A549 (cell line): ENCODE measurements at regions of chr12 and their contacts with region 1.

Region 1: DNA sequence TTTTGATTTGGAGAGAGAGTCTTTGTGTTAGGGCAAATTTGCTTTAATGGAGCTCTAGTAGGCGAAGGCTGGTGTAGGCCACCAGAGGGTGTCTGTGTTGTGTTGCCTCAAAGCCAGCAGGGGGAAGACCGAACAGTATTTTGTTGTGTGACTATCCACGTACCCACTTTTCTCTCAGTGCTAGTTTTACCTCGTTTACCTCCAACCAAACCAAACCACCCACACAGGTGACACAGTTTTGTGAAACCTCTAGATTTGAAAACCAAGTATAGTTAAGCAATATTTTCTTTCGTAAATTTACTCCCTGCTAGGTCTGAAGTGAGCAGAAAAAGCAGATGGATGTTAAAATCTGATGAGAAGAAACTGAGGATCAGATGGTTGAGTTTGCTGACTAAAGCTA is 36.3 kb upstream of the NPFF start:
- DNase-seq: peak; percentile 74 to 81
- ATAC-seq: peak; percentile 97 to 99
- H3K4me3 ChIP-seq: no peak overlapping the region
- H3K27ac ChIP-seq: peak overlapping the region; percentile 45 to 53
- H3K4me1 ChIP-seq: peaks cover 23% of the 10 kb centered on the region
- CTCF ChIP-seq: peak; percentile 93
- EP300 ChIP-seq: no peak
- POLR2A ChIP-seq: no peak
- RAD21 ChIP-seq: peak; percentile 92 to 94

Region 2: DNA sequence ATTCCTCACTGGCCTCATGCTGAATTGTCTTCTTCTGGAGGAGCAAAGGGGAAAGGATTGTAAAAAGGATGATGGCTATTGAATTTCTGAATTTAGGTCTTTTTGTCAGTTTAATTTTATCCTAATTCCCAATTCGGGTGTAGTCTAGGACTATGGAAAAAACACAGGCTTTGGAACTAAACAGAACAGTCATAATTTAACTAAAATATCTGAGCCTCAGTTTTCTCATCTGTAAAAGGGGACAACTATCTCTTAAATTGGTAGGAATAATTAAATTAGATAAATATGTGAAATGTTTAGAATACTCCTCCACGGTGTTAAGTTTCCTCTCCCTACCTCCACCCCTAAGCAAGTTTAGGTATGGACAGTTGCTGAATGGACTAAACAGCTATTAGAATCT is 166.8 kb before region 1 on chr12:
- CTCF ChIA-PET with region 1: no interaction called
- POLR2A ChIA-PET with region 1: no interaction called
- DNase-seq: no peak
- ATAC-seq: no peak
- H3K4me3 ChIP-seq: no peak overlapping the region
- H3K27ac ChIP-seq: peak overlapping the region in 1 of 2 experiments; percentile 38; a peak in 3 of 6 replicates
- H3K4me1 ChIP-seq: peaks cover 32% of the 10 kb centered on the region
- CTCF ChIP-seq: no peak
- EP300 ChIP-seq: no peak
- POLR2A ChIP-seq: no peak
- RAD21 ChIP-seq: no peak

Region 3: GRCh38 chr12:53561590-53561953 is 18.0 kb after region 1 on chr12:
- CTCF ChIA-PET with region 1: interaction called, 35 read pairs
- POLR2A ChIA-PET with region 1: no interaction called
- DNase-seq: peak; percentile 75 to 88
- ATAC-seq: peak; percentile 90 to 95
- H3K4me3 ChIP-seq: 0 out of 3 replicates have a peak overlapping the region, but pooled peaks have one; percentile 7
- H3K27ac ChIP-seq: peak overlapping the region; percentile 71 to 87
- H3K4me1 ChIP-seq: peaks cover 66% of the 10 kb centered on the region
- CTCF ChIP-seq: no peak
- EP300 ChIP-seq: no peak
- POLR2A ChIP-seq: no peak
- RAD21 ChIP-seq: 0 out of 5 replicates have a peak, but pooled peaks of 1 of the 2 experiments have one; percentile 4

Region 4: DNA sequence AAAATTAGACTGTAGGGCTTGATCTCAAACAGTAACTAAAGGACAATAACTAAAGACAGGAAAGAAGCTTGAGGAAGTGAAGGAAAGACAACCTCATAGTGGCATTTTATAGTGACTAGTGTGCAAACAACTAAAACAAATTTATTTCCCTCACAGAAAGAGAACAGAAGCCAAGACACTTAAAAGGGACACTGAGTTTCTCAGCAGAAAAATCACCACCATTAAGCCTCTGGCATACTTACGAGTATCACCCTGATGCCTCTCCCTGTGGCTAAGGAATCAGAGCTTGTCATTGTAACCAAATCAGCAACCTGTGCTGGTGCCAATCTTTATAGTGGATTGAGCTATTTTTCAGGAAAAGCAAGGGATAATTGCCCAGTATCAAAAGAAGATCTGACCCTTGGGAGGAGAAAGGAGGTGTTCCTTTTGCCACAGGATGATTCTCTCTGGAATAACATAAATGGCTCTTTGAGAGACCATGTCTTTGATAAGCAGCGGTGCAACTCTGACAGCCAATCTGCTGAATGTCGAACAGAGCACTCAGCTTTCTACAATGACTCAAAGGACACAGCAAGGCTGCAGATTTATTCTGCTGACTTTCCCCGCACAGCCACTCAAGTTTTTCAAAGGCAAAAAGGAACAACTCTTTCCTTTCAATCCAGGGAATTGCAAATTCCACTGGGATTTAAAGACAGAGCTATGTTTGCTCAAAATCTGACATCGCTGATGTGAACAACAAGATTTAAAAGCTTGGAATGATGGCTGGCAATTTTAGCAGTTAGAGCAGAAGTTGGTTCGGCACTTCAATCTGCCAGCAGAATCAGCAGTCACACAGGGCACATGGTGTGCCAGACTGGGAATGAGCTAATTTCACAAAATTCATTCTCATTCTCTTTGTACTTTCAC is 48.0 kb after region 1 on chr12:
- CTCF ChIA-PET with region 1: interaction called, 11 read pairs
- POLR2A ChIA-PET with region 1: no interaction called
- DNase-seq: no peak
- ATAC-seq: no peak
- H3K4me3 ChIP-seq: no peak overlapping the region
- H3K27ac ChIP-seq: peak overlapping the region in 1 of 2 experiments; percentile 10; a peak in 1 of 6 replicates
- H3K4me1 ChIP-seq: peaks cover 16% of the 10 kb centered on the region; the same call in 2 of the 3 replicates
- CTCF ChIP-seq: no peak
- EP300 ChIP-seq: no peak
- POLR2A ChIP-seq: no peak
- RAD21 ChIP-seq: no peak

Region 5: DNA sequence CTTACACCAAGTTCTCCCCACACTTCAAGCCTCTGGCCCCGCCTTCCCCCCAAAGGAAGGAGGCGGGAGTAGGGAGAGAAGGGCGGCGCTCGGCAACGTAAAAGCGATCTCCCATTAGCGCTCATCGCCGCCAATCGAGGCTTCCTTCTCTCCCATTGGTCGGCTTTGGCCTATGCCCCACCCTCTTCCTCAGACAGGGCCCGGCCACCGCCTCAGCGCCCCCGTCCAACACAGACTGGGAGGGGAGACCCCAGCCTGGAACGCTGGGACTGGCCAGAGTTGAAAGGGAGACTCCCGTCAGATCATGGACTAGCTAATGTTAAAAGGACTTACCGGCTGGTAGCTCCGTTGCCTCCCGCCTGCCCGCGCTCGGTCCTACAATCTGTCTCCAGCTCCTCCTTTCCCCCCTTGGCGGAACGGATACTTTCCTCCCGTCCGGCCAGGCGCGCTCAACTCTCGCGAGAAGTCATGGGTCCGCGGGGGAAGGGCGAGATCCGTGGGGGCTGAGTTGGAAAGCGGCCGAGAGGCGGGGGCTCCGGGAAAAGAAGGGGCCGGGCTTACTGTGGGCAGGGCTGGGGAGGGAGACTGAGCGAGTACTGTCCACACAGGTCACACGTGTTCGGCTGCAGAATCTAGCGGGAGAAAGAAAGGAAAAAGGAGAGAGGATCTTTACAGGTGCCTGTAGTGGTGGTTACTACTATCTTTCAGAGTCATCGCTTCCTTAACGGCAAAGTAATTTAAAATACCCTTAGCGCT is 82.6 kb after region 1 on chr12 and contains the start of gene ATF7:
- CTCF ChIA-PET with region 1: interaction called, 41 read pairs
- POLR2A ChIA-PET with region 1: interaction called, 5 read pairs
- DNase-seq: peak; percentile 97 to 99
- ATAC-seq: peak; percentile 98
- H3K4me3 ChIP-seq: peak within 1 kb of the TSS; percentile 67
- H3K27ac ChIP-seq: peak within 1 kb of the TSS; percentile 93 to 94
- H3K4me1 ChIP-seq: peaks cover 36% of the 10 kb centered on the region
- CTCF ChIP-seq: no peak
- EP300 ChIP-seq: no peak
- POLR2A ChIP-seq: peak; percentile 69
- RAD21 ChIP-seq: no peak; a peak in 2 of 5 replicates
- polyA plus RNA-seq, gene ATF7: 38.7 and 38.9 TPM in 2 replicates

Region 6: GRCh38 chr12:53684654-53685220 is 141.2 kb after region 1 on chr12:
- CTCF ChIA-PET with region 1: interaction called, 148 read pairs
- POLR2A ChIA-PET with region 1: interaction called, 5 read pairs
- DNase-seq: no peak
- ATAC-seq: no peak
- H3K4me3 ChIP-seq: no peak overlapping the region
- H3K27ac ChIP-seq: no peak overlapping the region
- H3K4me1 ChIP-seq: no peaks in the 10 kb centered on the region
- CTCF ChIP-seq: no peak
- EP300 ChIP-seq: no peak
- POLR2A ChIP-seq: no peak
- RAD21 ChIP-seq: no peak